ENCODE measurements at regions of chr13 and their contacts with region 1.

Region 1: DNA sequence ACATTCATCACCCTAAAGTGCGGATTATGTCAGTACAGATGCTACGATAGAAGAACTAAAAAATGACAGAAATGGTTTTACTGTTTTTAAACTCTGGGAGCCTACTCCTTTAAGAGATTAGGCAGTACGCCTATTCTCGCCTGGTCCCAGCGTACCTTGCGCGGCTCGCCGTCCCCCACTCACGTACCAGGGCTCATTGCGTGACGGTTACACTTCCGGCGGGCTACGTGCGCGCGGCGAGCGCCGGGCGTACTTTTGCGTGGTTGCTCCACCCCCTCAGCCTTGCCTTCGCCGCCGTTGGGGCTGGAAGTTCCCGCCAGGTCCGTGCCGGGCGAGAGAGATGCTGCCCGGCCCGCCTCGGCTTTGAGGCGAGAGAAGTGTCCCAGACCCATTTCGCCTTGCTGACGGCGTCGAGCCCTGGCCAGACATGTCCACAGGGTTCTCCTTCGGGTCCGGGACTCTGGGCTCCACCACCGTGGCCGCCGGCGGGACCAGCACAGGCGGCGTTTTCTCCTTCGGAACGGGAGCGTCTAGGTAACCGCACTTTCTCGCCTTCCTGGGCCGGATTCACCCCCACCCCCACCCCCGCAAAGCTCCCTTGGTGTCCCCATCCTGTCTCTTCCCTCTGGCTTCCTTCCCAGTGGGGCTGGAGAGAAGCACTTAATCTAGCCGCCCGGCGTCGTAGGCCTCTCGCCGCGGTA is at the start of gene NUP58:
- DNase-seq: peak; percentile 97
- H3K4me3 ChIP-seq: peak within 1 kb of the TSS; percentile 79
- H3K27ac ChIP-seq: peak within 1 kb of the TSS; percentile 91
- H3K4me1 ChIP-seq: peaks cover 12% of the 10 kb centered on the region
- H3K27me3 ChIP-seq: no peaks in the 10 kb centered on the region
- CTCF ChIP-seq: no peak
- total RNA-seq, gene NUP58: 101 TPM in 2 replicates

Region 2: GRCh38 chr13:25180775-25181537 is 120.5 kb before region 1 on chr13:
- CTCF ChIA-PET with region 1: no interaction called
- POLR2A ChIA-PET with region 1: interaction called, 10 read pairs
- intact Hi-C with region 1: no loop called
- DNase-seq: peak; percentile 63
- H3K4me3 ChIP-seq: no peak overlapping the region
- H3K27ac ChIP-seq: peak overlapping the region; percentile 72
- H3K4me1 ChIP-seq: peaks cover 40% of the 10 kb centered on the region
- H3K27me3 ChIP-seq: no peaks in the 10 kb centered on the region
- CTCF ChIP-seq: no peak

Region 3: GRCh38 chr13:25203127-25203740 is 98.3 kb before region 1 on chr13:
- CTCF ChIA-PET with region 1: no interaction called
- POLR2A ChIA-PET with region 1: no interaction called
- intact Hi-C with region 1: no loop called
- DNase-seq: no peak
- H3K4me3 ChIP-seq: no peak overlapping the region
- H3K27ac ChIP-seq: no peak overlapping the region
- H3K4me1 ChIP-seq: no peaks in the 10 kb centered on the region
- H3K27me3 ChIP-seq: no peaks in the 10 kb centered on the region
- CTCF ChIP-seq: no peak

Region 4: GRCh38 chr13:25345576-25345975 is 44.1 kb after region 1 on chr13:
- CTCF ChIA-PET with region 1: no interaction called
- POLR2A ChIA-PET with region 1: interaction called, 17 read pairs
- intact Hi-C with region 1: no loop called
- DNase-seq: no peak
- H3K4me3 ChIP-seq: no peak overlapping the region
- H3K27ac ChIP-seq: no peak overlapping the region
- H3K4me1 ChIP-seq: peaks cover 4% of the 10 kb centered on the region
- H3K27me3 ChIP-seq: no peaks in the 10 kb centered on the region
- CTCF ChIP-seq: no peak

Region 5: GRCh38 chr13:25541434-25542123 is 240.1 kb after region 1 on chr13:
- CTCF ChIA-PET with region 1: no interaction called
- POLR2A ChIA-PET with region 1: no interaction called
- intact Hi-C with region 1: no loop called
- DNase-seq: no peak
- H3K4me3 ChIP-seq: no peak overlapping the region
- H3K27ac ChIP-seq: no peak overlapping the region
- H3K4me1 ChIP-seq: no peaks in the 10 kb centered on the region
- H3K27me3 ChIP-seq: no peaks in the 10 kb centered on the region
- CTCF ChIP-seq: no peak

Region 6: DNA sequence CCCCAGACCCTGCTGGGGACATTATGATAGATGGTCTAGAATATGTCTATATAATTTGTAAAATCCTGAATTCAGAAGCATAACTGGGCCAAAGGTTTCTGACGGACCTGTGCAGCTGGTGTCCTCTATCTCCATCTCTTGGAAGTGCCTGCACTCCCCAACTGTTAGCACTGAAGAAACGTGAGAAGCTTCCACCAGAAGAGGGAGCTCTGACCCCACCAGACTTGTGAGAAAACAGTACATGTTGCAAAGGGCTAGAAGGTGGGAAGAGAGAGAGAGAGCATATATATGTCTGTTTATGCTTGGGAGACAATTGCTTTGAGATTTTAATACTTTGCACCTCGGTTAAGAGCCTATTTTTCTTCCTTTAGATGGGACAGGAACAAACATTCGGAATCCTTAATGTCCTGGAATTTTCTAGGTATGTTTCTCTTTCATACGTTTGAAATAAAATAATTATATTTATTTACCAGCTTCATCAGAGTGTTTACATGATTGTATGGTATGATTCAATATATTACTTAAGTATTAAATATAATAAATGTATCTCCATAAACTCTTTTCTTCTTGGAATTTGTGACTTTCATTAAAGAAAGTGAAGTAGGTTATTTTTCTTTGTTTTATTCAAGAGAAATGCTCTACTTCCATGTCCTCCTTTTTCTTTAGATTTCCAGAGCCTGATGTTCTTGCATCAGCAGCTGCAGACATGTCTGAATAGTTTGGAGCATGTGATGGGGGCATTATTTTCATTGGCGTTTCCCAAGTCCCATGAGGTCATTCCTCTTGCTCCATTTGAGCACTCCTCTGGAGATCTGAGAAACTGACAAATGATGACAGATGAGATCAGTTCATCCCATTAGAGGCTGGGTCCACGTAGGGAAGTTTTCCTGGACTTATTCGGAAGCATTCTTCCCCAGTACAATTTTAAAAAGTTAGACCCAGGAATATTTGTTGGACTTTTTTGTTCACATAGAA is 273.2 kb after region 1 on chr13:
- CTCF ChIA-PET with region 1: no interaction called
- POLR2A ChIA-PET with region 1: no interaction called
- intact Hi-C with region 1: no loop called
- DNase-seq: peak; percentile 91
- H3K4me3 ChIP-seq: no peak overlapping the region
- H3K27ac ChIP-seq: no peak overlapping the region
- H3K4me1 ChIP-seq: peaks cover 2% of the 10 kb centered on the region
- H3K27me3 ChIP-seq: no peaks in the 10 kb centered on the region
- CTCF ChIP-seq: peak; percentile 93

Measured in A673 (cell line).